Activated CD8-positive, alpha-beta memory T cell treated with anti-CD3 and anti-CD28 coated beads, Interleukin-2, amount 10 ng/mL, durations not matched to agents 7 days and 5 days (primary cell): ENCODE measurements at regions of chr16 and their contacts with region 1.

Region 1: GRCh38 chr16:84952335-84953189 is 58.8 kb downstream of the ZDHHC7 start:
- DNase-seq: peak; percentile 77
- ATAC-seq: peak; percentile 85
- H3K4me3 Mint-ChIP-seq: no peak overlapping the region
- H3K27ac Mint-ChIP-seq: no peak overlapping the region
- H3K4me1 Mint-ChIP-seq: no peaks in the 10 kb centered on the region
- H3K27me3 Mint-ChIP-seq: peaks cover 3% of the 10 kb centered on the region

Region 2: GRCh38 chr16:84898447-84898846 is 54.1 kb before region 1 on chr16:
- CTCF ChIA-PET with region 1: no interaction called
- DNase-seq: no peak
- ATAC-seq: no peak
- H3K4me3 Mint-ChIP-seq: no peak overlapping the region
- H3K27ac Mint-ChIP-seq: no peak overlapping the region
- H3K4me1 Mint-ChIP-seq: peaks cover 7% of the 10 kb centered on the region
- H3K27me3 Mint-ChIP-seq: peaks cover 19% of the 10 kb centered on the region

Region 3: GRCh38 chr16:84925092-84925772 is 27.3 kb before region 1 on chr16:
- CTCF ChIA-PET with region 1: interaction called, 15 read pairs
- DNase-seq: peak; percentile 74
- ATAC-seq: peak; percentile 64
- H3K4me3 Mint-ChIP-seq: no peak overlapping the region
- H3K27ac Mint-ChIP-seq: no peak overlapping the region
- H3K4me1 Mint-ChIP-seq: no peaks in the 10 kb centered on the region
- H3K27me3 Mint-ChIP-seq: no peaks in the 10 kb centered on the region

Region 4: GRCh38 chr16:84963066-84963465 is 10.5 kb after region 1 on chr16:
- CTCF ChIA-PET with region 1: interaction called, 18 read pairs
- DNase-seq: no peak
- ATAC-seq: no peak
- H3K4me3 Mint-ChIP-seq: no peak overlapping the region
- H3K27ac Mint-ChIP-seq: no peak overlapping the region
- H3K4me1 Mint-ChIP-seq: no peaks in the 10 kb centered on the region
- H3K27me3 Mint-ChIP-seq: peaks cover 10% of the 10 kb centered on the region

Region 5: GRCh38 chr16:84970447-84971127 is 18.0 kb after region 1 on chr16:
- CTCF ChIA-PET with region 1: interaction called, 45 read pairs
- DNase-seq: peak; percentile 82
- ATAC-seq: peak; percentile 97
- H3K4me3 Mint-ChIP-seq: no peak overlapping the region
- H3K27ac Mint-ChIP-seq: no peak overlapping the region
- H3K4me1 Mint-ChIP-seq: no peaks in the 10 kb centered on the region
- H3K27me3 Mint-ChIP-seq: peaks cover 2% of the 10 kb centered on the region